Activated T-helper 1 cell treated with anti-CD3 and anti-CD28 coated beads, Interleukin-12 subunit alpha, Interleukin-12 subunit beta, Interleukin-2, Interleukin-4 antibody, amounts not matched to agents 30 ng/mL and 10 ng/mL and 1 ng/mL, durations not matched to agents 14 hours and 24 hours and 36 hours (primary cell): ENCODE measurements at regions of chr12 and their contacts with region 1.

Region 1: GRCh38 chr12:120086801-120087621 is 29.5 kb downstream of the RAB35 start:
- DNase-seq: peak; percentile 99
- H3K4me3 Mint-ChIP-seq: peak overlapping the region; percentile 81
- H3K27ac Mint-ChIP-seq: peak overlapping the region; percentile 86
- H3K4me1 Mint-ChIP-seq: peaks cover 32% of the 10 kb centered on the region
- H3K27me3 Mint-ChIP-seq: peaks cover 1% of the 10 kb centered on the region

Region 2: GRCh38 chr12:119876761-119877638 is 210.0 kb before region 1 on chr12 and contains the start of gene CIT:
- intact Hi-C with region 1: loop called (anchors 1 kb)
- DNase-seq: peak; percentile 87
- H3K4me3 Mint-ChIP-seq: peak within 1 kb of the TSS; percentile 84
- H3K27ac Mint-ChIP-seq: peak within 1 kb of the TSS; percentile 67
- H3K4me1 Mint-ChIP-seq: peaks cover 25% of the 10 kb centered on the region
- H3K27me3 Mint-ChIP-seq: peaks cover 12% of the 10 kb centered on the region
- total RNA-seq, gene CIT: 36.6 and 40.3 TPM in 2 replicates

Region 3: DNA sequence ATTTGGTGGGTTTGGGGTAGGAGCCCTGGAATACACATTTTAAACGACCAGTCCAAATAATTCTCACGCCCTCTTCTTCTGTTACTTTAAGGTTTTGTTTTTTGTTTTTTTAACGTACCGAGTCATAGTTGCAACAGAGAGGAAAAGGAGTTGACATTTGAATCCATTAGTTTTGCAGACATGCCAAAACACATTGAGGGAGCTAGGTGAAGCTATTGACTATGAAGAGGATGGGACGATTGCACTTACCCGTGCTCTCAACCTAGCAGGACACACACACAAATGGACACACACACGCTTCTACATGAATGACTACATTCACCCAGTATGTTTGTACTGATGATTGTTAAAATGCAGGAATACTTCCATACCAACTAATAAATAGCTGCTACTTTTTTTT is 155.6 kb before region 1 on chr12:
- intact Hi-C with region 1: loop called (anchors 2 kb)
- DNase-seq: no peak
- H3K4me3 Mint-ChIP-seq: no peak overlapping the region
- H3K27ac Mint-ChIP-seq: no peak overlapping the region
- H3K4me1 Mint-ChIP-seq: no peaks in the 10 kb centered on the region
- H3K27me3 Mint-ChIP-seq: peaks cover 3% of the 10 kb centered on the region

Region 4: DNA sequence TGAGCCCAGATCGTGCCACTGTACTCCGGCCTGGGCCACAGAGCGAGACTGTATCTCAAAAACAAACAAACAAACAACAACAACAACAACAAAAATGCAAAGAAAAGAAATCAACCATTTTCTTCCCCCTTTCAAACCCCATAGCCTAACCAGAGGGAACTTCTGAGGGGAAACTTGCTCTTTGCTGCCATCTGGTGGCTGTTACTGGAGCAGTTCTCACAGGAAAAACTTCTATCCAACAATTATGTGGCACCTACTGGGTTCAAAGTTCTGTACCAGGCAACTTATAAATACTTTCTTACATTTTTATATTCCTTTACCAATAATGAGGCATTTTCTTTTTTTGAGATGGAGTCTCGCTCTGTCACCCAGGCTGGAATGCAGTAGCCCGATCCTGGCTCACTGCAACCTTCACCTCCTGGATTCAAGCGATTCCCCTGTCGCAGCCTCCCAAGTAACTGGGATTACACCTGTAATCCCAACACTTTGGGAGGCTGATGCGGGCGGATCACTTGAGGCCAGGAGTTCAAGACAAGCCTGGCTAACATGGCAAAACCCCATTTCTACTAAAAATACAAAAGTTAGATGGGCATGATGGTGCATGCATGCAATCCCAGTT is 148.9 kb before region 1 on chr12:
- intact Hi-C with region 1: loop called (anchors 1 kb)
- DNase-seq: peak; percentile 41
- H3K4me3 Mint-ChIP-seq: no peak overlapping the region
- H3K27ac Mint-ChIP-seq: no peak overlapping the region
- H3K4me1 Mint-ChIP-seq: no peaks in the 10 kb centered on the region
- H3K27me3 Mint-ChIP-seq: peaks cover 3% of the 10 kb centered on the region

Region 5: DNA sequence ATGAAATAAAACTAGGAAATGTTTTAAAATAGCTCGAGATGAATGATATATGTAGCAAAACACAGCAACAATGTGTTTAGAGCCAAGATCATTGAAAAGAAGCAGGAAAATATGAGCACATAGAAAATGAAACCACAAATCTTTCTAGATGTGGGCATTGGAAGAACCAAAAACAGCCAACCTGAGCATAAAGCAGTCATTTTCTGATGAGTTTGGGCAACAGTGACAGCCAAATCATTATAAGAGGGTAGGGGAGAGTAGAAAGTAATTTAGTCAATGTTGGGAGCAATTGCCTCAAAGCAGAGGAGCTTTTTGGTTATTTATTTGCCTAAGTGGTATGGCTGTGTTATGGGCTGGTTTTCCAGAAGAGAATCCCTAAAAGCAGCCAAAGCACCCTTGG is 106.8 kb before region 1 on chr12:
- intact Hi-C with region 1: loop called (anchors 1 kb)
- DNase-seq: peak; percentile 9
- H3K4me3 Mint-ChIP-seq: peak overlapping the region; percentile 53
- H3K27ac Mint-ChIP-seq: peak overlapping the region; percentile 90
- H3K4me1 Mint-ChIP-seq: peaks cover 11% of the 10 kb centered on the region
- H3K27me3 Mint-ChIP-seq: peaks cover 13% of the 10 kb centered on the region

Region 6: DNA sequence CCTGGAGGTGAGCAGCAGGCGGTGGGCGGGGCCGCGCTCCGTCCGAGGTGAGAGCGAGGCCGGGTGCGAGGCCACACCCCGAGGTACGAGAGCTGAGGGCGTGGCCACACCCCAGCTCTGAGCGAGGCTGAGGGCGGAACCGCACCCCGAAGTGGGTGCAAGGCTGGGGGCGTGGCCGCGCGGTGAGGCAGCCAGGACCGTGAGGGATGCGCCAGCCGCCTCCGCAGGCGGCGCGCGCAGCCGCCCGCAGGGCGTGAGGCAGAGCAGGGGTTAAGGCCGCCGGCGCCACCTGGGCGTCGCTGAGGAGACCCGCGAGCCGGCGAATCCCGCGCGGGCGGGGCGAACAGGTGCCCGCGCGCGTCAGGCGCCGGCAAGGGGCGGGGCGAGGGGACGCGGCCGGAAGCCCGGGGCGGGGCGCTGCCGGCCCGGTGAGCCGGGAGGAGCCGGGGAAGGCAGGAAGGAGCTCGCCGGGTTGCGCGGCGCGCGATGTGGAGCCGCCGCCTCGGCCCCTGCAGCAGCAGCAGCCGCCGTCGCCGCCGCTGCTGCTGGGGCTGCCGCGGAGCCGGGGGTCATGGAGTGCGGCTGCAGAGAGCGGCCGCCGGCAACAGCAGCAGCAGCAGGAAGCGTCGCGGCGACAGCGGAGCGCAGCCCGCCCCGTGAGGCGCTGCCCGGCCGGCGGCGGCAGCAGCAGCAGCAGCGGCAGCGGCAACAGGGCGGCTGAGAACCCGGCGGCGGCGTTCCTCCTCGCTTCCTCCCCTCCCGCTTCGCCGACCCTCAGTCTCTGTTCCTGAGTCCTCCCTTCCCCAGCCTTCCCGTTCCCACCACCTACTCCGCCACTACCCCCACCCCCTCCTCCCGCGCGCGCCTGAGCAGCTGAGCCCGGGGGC is 98.0 kb before region 1 on chr12 and contains the start of gene BICDL1:
- intact Hi-C with region 1: loop called (anchors 1 kb)
- DNase-seq: peak; percentile 97
- H3K4me3 Mint-ChIP-seq: peak within 1 kb of the TSS; percentile 94
- H3K27ac Mint-ChIP-seq: peak within 1 kb of the TSS; percentile 95
- H3K4me1 Mint-ChIP-seq: peaks cover 50% of the 10 kb centered on the region
- H3K27me3 Mint-ChIP-seq: peaks cover 11% of the 10 kb centered on the region
- total RNA-seq, gene BICDL1: 136 and 140 TPM in 2 replicates

Region 7: DNA sequence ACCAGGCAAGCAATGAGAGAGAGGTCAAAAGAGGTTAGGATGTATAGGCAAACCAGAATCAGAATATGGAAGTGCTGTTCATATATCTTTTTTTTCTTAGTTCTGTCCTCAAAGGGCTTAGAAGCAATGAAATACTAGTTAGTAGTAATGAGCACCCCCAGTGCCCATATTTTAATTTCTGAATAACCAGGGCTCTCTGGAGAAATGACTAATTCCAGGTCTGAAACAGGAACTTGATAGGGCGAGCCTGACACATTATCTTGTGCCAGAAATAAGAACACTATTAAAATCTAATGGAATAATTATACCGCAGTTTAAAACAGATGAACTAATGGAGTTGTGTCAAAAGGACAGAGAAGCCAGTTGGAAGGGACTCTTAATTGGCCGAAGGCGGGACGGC is 67.1 kb before region 1 on chr12:
- intact Hi-C with region 1: no loop called
- DNase-seq: no peak
- H3K4me3 Mint-ChIP-seq: no peak overlapping the region
- H3K27ac Mint-ChIP-seq: peak overlapping the region; percentile 44
- H3K4me1 Mint-ChIP-seq: peaks cover 34% of the 10 kb centered on the region
- H3K27me3 Mint-ChIP-seq: no peaks in the 10 kb centered on the region

Region 8: GRCh38 chr12:120301962-120302815 is 215.2 kb after region 1 on chr12 and contains the start of gene SIRT4:
- intact Hi-C with region 1: no loop called
- DNase-seq: peak; percentile 85
- H3K4me3 Mint-ChIP-seq: peak within 1 kb of the TSS; percentile 96
- H3K27ac Mint-ChIP-seq: peak within 1 kb of the TSS; percentile 86
- H3K4me1 Mint-ChIP-seq: peaks cover 6% of the 10 kb centered on the region
- H3K27me3 Mint-ChIP-seq: peaks cover 5% of the 10 kb centered on the region
- total RNA-seq, gene SIRT4: 1.0 and 1.7 TPM in 2 replicates